ENCODE measurements at regions of chr4 and their contacts with region 1.

Region 1: DNA sequence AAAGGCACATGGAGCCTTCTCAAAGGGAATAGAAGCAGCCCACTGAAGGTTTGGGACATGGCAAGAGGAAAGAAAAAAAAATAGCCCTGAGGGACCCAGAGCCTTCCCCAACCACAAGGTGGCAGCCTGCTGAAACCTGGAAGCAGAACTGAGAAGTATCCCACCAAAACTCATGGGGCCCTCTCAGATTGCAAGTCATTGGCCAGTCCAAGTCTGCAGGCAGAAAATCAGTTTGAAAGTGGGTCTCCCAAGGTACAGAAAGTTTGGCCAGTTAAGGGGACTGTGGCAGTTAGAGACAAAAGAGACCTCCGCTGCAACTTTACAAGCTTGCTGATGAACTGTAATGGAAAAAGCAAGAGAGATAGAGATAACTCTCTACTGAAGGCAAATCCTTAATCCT is 155.8 kb downstream of the ANTXR2 start:
- DNase-seq: peak; percentile 31
- ATAC-seq: peak in 1 of 2 donors; percentile 39

Region 2: DNA sequence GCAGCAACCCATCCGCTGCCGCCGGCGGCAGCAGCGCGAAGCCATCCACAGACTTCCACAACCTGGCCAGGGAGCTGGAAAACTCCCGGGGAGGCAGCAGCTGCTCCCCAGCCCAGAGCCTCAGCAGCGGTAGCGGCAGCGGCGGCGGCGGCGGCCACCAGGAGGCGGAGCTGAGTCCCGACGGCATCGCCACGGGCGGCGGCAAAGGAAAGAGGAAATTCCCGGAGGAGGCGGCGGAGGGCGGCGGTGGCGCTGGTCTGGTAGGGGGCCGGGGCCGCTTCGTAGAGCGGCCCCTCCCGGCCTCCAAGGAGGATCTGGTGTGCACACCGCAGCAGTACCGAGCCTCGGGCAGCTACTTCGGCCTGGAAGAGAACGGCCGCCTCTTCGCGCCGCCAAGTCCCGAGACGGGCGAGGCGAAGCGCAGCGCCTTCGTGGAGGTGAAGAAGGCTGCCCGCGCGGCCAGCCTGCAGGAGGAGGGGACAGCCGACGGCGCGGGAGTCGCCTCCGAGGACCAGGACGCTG is 285.0 kb after region 1 on chr4:
- intact Hi-C with region 1: loop called in 1 of 2 experiments (anchors 10 kb)
- DNase-seq: peak; percentile 86
- ATAC-seq: peak; percentile 87 to 88

Measured in left cardiac atrium (tissue), 4 donors.